Right cardiac atrium (tissue), 5 donors: ENCODE measurements at regions of chr19 and their contacts with region 1.

Region 1: GRCh38 chr19:5038631-5039271 is 69.8 kb downstream of the KDM4B start:
- DNase-seq: peak in 1 of 3 donors; percentile 46
- ATAC-seq: peak; percentile 4 to 56
- H3K4me3 ChIP-seq: no peak overlapping the region
- H3K27ac ChIP-seq: no peak overlapping the region
- H3K4me1 ChIP-seq: peaks cover 4% of the 10 kb centered on the region
- H3K27me3 ChIP-seq: no peaks in the 10 kb centered on the region

Region 2: GRCh38 chr19:4867534-4868285 is 171.0 kb before region 1 on chr19 and contains the start of gene PLIN3:
- intact Hi-C with region 1: loop called in 3 of 4 experiments (anchors 5 kb)
- DNase-seq: peak; percentile 98 to 99 (median 99)
- ATAC-seq: peak; percentile 98
- H3K4me3 ChIP-seq: peak within 1 kb of the TSS; percentile 79
- H3K27ac ChIP-seq: peak within 1 kb of the TSS; percentile 27
- H3K4me1 ChIP-seq: peaks cover 4% of the 10 kb centered on the region
- H3K27me3 ChIP-seq: no peaks in the 10 kb centered on the region
- total RNA-seq, gene PLIN3: 26.5 to 32.2 (median 28.5) TPM

Region 3: GRCh38 chr19:5128251-5128935 is 89.6 kb after region 1 on chr19:
- intact Hi-C with region 1: no loop called
- DNase-seq: peak; percentile 86 to 95 (median 94)
- ATAC-seq: peak; percentile 90 to 93
- H3K4me3 ChIP-seq: no peak overlapping the region
- H3K27ac ChIP-seq: peak overlapping the region; percentile 63
- H3K4me1 ChIP-seq: peaks cover 18% of the 10 kb centered on the region
- H3K27me3 ChIP-seq: no peaks in the 10 kb centered on the region

Region 4: DNA sequence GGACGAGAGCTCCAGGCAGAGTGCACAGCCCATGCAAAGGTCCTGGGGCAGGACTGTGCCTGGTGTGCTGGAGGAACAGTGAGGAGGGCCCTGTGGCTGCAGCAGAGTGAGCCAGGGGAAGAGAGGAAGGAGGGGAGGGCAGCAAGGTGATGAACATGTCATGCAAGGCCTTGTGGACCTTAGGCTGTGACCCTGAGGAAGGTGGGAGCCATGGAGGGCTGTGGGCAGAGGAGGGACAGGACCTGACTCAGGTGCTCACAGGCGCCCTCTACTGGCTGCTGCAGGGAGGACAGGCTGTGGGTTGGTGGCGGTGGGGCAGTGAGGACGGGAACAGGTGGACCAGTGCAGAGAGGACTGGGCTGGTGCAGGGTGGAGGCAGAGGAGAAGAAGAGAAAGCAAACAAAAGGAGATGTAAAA is 131.6 kb after region 1 on chr19:
- intact Hi-C with region 1: no loop called
- DNase-seq: peak in 2 of 3 donors; percentile 65 to 75
- ATAC-seq: peak; percentile 40 to 44
- H3K4me3 ChIP-seq: no peak overlapping the region
- H3K27ac ChIP-seq: no peak overlapping the region
- H3K4me1 ChIP-seq: no peaks in the 10 kb centered on the region
- H3K27me3 ChIP-seq: no peaks in the 10 kb centered on the region